ENCODE measurements at regions of chr1 and their contacts with region 1.

Region 1: DNA sequence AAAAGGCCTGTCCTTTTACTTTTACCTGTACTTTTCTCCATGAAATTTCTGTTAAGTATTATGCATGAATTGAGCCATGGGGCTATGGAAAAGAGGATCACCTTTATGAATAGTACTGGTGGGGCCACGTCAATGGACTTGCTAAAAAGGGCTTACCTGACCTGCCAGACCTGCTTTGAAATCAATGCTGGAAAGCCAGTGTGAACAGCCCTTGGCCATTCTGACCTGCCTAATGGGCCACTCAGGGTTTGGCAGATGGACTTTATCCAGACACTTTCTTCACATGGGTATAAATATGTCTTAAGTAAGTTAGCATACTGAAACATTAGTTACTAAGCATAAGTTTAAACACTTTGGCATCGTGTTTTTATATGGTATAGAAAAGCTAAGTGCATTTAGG is 8.3 kb upstream of the GUK1 start:
- DNase-seq: no peak
- H3K4me3 Mint-ChIP-seq: no peak overlapping the region
- H3K27ac Mint-ChIP-seq: no peak overlapping the region
- H3K4me1 Mint-ChIP-seq: peaks cover 10% of the 10 kb centered on the region
- H3K27me3 Mint-ChIP-seq: peaks cover 18% of the 10 kb centered on the region
- CTCF ChIP-seq: no peak

Region 2: DNA sequence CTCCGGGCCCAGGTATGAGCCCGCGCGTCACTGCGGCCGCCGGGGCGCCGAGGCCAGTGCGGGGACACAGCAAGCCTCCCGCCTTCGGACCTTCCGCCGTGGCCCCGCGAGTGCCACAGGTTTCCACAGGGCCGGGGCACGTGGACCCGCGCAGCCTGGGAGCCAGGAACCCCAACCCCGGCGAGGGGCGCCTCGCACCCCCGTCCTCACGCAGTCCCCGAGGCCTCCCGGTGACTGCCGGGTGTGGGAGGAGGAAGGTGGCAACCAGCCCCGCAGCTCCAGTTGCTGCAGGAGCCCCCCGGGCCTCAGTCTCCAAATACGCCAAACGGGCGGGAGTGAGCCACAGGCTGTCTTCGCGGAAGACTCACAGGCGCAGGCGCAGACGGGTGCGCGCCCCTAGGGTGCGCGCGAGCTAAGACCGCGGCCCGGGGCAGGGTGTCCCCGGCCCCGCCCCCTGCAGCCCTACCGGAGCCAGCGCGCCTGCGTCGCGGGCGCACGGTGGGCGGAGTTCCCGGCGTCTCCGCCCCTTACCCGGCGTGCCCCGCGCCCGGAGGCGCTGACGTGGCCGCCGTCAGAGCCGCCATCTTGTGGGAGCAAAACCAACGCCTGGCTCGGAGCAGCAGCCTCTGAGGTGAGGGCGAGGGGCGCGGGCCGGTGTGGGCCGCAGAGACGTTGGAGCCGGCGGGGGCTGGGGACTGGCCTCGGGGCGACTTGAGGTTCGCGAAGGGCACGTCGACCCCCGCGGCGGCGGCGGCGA is 49.5 kb before region 1 on chr1 and contains the start of gene ARF1:
- CTCF ChIA-PET with region 1: interaction called, 6 read pairs
- POLR2A ChIA-PET with region 1: interaction called, 12 read pairs
- intact Hi-C with region 1: no loop called
- DNase-seq: peak; percentile 98
- H3K4me3 Mint-ChIP-seq: peak within 1 kb of the TSS; percentile 98
- H3K27ac Mint-ChIP-seq: peak within 1 kb of the TSS; percentile 97
- H3K4me1 Mint-ChIP-seq: peaks cover 49% of the 10 kb centered on the region
- H3K27me3 Mint-ChIP-seq: no peaks in the 10 kb centered on the region
- CTCF ChIP-seq: no peak
- total RNA-seq, gene ARF1: 870 and 1,140 TPM in 2 replicates

Region 3: DNA sequence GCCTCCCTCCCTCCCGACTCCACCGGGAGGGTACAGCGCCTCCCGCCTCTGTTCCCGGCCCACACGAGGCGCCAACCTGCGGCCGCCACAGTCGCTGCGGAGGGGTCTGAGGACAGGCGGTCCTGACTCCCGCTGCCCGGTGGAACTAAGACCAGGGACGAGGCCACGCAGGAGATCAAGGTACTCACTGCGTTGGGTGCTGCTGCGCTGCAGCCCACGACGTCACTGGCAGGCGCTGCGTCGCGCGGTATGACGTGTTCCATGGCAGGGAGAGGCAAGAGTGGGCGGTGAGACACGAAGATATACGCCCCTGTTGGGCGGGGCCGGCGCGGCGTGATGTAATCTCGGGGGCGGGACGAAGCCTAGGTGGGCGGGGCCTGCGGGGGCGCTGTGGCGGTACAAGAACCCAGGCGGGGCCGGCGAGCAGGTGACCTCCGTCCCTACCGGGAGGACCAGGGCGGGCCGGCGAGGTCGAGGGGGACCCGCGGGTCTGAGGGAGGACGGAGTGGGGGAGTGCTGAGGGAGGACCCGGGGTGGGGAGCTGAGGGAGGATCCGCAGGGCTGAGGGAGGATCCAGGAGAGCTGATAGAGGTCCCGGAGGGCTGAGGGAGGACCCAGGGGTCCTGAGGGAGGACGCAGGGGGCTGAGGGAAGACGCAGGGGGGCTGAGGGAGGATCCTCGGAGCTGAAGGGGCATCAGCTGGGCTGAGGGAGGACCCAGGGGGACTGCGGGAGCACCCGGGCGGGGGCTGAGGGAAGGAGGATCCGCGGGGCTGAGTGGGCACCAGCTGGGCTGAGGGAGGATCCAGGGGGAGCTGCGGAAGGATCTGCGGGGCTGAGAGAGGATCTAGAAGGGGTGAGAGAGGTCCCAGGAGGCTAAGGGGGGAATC is 22.4 kb before region 1 on chr1 and contains the start of gene MRPL55:
- CTCF ChIA-PET with region 1: interaction called, 26 read pairs
- POLR2A ChIA-PET with region 1: interaction called, 26 read pairs
- intact Hi-C with region 1: no loop called
- DNase-seq: peak; percentile 99
- H3K4me3 Mint-ChIP-seq: peak within 1 kb of the TSS; percentile 95
- H3K27ac Mint-ChIP-seq: peak within 1 kb of the TSS; percentile 92
- H3K4me1 Mint-ChIP-seq: peaks cover 12% of the 10 kb centered on the region
- H3K27me3 Mint-ChIP-seq: no peaks in the 10 kb centered on the region
- CTCF ChIP-seq: no peak
- total RNA-seq, gene MRPL55: 85.4 and 111 TPM in 2 replicates

Region 4: DNA sequence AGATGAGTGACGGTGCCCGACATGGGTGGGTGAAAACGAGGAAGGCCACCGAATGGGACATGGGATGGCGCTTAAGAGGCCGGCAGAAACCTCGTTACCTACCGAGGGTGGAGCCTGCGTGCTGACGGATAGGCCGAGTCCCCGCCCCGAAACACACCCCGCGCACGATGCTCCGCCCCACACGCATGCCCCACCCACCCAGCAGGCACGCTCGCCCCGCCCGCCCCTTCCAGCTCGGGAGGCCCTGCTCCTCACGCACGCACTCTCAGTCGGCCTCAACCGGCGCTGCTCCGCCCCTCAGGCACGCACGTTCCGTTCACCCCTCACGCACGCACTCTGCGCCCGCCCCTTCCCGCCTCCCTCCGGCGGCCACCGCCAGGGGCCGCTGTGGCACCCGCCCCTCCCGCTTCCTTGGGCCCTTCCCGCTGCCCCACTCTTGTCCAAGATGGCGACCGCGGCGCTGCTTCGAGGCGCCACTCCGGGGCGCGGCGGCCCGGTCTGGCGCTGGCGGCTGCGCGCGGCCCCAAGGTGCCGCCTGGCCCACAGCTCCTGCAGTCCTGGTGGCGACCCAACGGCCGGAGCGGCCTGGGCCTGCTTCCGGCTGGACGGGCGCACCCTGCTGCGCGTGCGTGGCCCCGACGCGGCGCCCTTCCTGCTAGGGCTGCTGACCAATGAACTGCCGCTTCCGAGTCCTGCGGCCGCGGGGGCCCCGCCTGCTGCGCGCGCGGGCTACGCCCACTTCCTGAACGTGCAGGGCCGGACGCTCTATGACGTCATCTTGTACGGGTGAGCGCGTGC is 33.8 kb after region 1 on chr1 and contains the start of gene IBA57:
- CTCF ChIA-PET with region 1: interaction called, 61 read pairs
- POLR2A ChIA-PET with region 1: interaction called, 318 read pairs
- intact Hi-C with region 1: loop called (anchors 1 kb)
- DNase-seq: peak; percentile 100
- H3K4me3 Mint-ChIP-seq: peak within 1 kb of the TSS; percentile 70
- H3K27ac Mint-ChIP-seq: peak within 1 kb of the TSS; percentile 86
- H3K4me1 Mint-ChIP-seq: peaks cover 46% of the 10 kb centered on the region
- H3K27me3 Mint-ChIP-seq: no peaks in the 10 kb centered on the region
- CTCF ChIP-seq: peak; percentile 99
- total RNA-seq, gene IBA57: 12.0 and 16.5 TPM in 2 replicates

Region 5: DNA sequence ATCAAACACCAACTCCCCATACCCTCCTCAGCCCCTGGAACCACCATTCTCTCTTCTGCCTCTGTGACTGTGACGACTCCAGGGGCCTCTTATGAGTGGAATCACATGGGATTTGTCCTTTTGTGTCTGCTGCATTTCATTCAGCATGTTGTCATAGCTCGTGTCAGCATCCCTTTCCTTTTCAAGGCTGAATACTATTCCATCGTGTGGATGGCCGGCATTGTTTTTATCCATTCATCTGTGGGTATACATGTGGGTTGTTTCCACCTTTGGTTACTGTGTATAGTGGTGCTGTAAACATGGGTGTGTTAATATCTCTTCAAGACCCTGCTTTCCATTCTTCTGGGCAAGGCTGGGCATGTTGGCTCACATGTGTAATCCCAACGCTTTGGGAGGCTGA is 59.0 kb after region 1 on chr1:
- CTCF ChIA-PET with region 1: interaction called, 5 read pairs
- POLR2A ChIA-PET with region 1: no interaction called
- intact Hi-C with region 1: loop called (anchors 1 kb)
- DNase-seq: no peak
- H3K4me3 Mint-ChIP-seq: no peak overlapping the region
- H3K27ac Mint-ChIP-seq: no peak overlapping the region
- H3K4me1 Mint-ChIP-seq: no peaks in the 10 kb centered on the region
- H3K27me3 Mint-ChIP-seq: no peaks in the 10 kb centered on the region
- CTCF ChIP-seq: no peak

Region 6: GRCh38 chr1:228259951-228260350 is 128.2 kb after region 1 on chr1:
- CTCF ChIA-PET with region 1: no interaction called
- POLR2A ChIA-PET with region 1: no interaction called
- intact Hi-C with region 1: loop called (anchors 1 kb)
- DNase-seq: peak; percentile 56
- H3K4me3 Mint-ChIP-seq: no peak overlapping the region
- H3K27ac Mint-ChIP-seq: no peak overlapping the region
- H3K4me1 Mint-ChIP-seq: no peaks in the 10 kb centered on the region
- H3K27me3 Mint-ChIP-seq: no peaks in the 10 kb centered on the region
- CTCF ChIP-seq: peak; percentile 40

Region 7: GRCh38 chr1:228515200-228515834 is 383.6 kb after region 1 on chr1:
- CTCF ChIA-PET with region 1: interaction called, 29 read pairs
- POLR2A ChIA-PET with region 1: interaction called, 8 read pairs
- intact Hi-C with region 1: loop called (anchors 1 kb)
- DNase-seq: peak; percentile 65
- H3K4me3 Mint-ChIP-seq: no peak overlapping the region
- H3K27ac Mint-ChIP-seq: no peak overlapping the region
- H3K4me1 Mint-ChIP-seq: peaks cover 9% of the 10 kb centered on the region
- H3K27me3 Mint-ChIP-seq: peaks cover 75% of the 10 kb centered on the region
- CTCF ChIP-seq: peak; percentile 97